B cell (primary cell): ENCODE measurements at regions of chr5 and their contacts with region 1.

Region 1: DNA sequence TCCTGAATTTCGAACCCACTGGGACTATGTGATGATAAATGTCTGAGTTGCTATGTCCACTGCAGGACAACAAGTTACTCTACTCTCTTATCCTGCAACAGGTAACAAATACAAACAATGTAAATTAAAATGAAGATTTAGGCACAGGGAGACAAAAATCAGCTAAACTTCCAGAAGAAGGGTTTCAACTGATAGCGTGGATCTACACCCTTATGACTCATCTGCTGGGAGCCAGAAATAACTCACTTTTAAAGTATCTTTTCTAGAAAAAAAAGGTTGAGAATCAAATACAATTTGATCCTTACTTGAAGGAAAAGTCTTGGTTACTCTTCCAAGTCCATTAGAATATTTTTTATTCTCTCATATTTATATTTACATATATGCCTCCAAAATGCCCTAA is 21.4 kb downstream of the PJA2 start:
- DNase-seq: no peak
- ATAC-seq: no peak
- H3K4me3 ChIP-seq: no peak overlapping the region
- H3K4me3 Mint-ChIP-seq: no peak overlapping the region
- H3K27ac ChIP-seq: no peak overlapping the region
- H3K27ac Mint-ChIP-seq: no peak overlapping the region
- H3K4me1 ChIP-seq: peaks cover 0 to 9% of the 10 kb centered on the region in 2 donors
- H3K4me1 Mint-ChIP-seq: peaks cover 68% of the 10 kb centered on the region
- H3K27me3 ChIP-seq: no peaks in the 10 kb centered on the region
- H3K27me3 Mint-ChIP-seq: no peaks in the 10 kb centered on the region
- CTCF ChIP-seq: no peak

Region 2: GRCh38 chr5:108715408-108715807 is 673.0 kb before region 1 on chr5:
- CTCF ChIA-PET with region 1: no interaction called
- POLR2A ChIA-PET with region 1: interaction called, 10 read pairs
- intact Hi-C with region 1: no loop called
- DNase-seq: no peak
- ATAC-seq: no peak
- H3K4me3 ChIP-seq: no peak overlapping the region
- H3K4me3 Mint-ChIP-seq: no peak overlapping the region
- H3K27ac ChIP-seq: no peak overlapping the region
- H3K27ac Mint-ChIP-seq: no peak overlapping the region
- H3K4me1 ChIP-seq: no peaks in the 10 kb centered on the region
- H3K4me1 Mint-ChIP-seq: no peaks in the 10 kb centered on the region
- H3K27me3 ChIP-seq: no peaks in the 10 kb centered on the region
- H3K27me3 Mint-ChIP-seq: no peaks in the 10 kb centered on the region
- CTCF ChIP-seq: no peak

Region 3: DNA sequence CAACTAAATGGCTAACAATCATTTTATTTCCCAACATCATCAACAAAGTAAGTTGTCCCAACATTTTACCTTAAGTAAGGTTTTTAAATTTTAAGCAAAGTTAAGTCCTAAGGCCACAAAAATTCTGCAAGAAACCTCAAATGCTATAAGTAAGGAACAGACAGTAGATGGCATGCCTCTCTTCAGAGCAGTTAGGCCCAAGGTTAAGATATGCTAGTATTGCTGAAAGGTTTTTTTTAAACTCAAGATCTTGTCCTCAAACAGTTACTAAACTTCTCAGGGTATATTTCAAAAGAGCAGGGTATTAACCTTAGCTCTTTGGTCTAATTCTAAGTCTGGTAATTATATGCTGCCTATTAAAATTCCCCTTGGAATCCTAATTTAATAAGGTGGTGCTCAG is 13.8 kb before region 1 on chr5:
- CTCF ChIA-PET with region 1: no interaction called
- POLR2A ChIA-PET with region 1: no interaction called
- intact Hi-C with region 1: loop called (anchors 2 kb)
- DNase-seq: no peak
- ATAC-seq: no peak
- H3K4me3 ChIP-seq: no peak overlapping the region
- H3K4me3 Mint-ChIP-seq: no peak overlapping the region
- H3K27ac ChIP-seq: no peak overlapping the region
- H3K27ac Mint-ChIP-seq: no peak overlapping the region
- H3K4me1 ChIP-seq: no peaks in the 10 kb centered on the region
- H3K4me1 Mint-ChIP-seq: peaks cover 18% of the 10 kb centered on the region
- H3K27me3 ChIP-seq: no peaks in the 10 kb centered on the region
- H3K27me3 Mint-ChIP-seq: no peaks in the 10 kb centered on the region
- CTCF ChIP-seq: peak; percentile 10

Region 4: DNA sequence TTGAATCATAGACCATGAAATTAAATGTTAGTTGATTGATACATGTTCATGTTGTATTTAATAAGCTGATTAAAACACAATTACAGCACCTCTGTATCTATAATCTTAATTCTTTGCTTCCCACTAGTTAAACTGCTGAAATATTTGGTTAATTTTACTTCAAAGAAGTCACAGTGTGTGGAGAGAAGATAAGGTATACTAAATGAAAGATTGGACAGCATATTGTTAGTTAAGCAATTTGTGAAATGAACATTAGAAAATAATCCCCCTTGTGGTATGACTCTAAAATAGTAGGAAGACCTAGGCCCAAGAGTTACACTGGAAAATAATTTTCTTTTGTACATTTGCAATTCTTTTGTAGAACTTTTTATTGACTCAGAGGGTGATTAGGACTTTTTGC is 331.6 kb after region 1 on chr5:
- CTCF ChIA-PET with region 1: no interaction called
- POLR2A ChIA-PET with region 1: no interaction called
- intact Hi-C with region 1: no loop called
- DNase-seq: no peak
- ATAC-seq: no peak
- H3K4me3 ChIP-seq: no peak overlapping the region
- H3K4me3 Mint-ChIP-seq: no peak overlapping the region
- H3K27ac ChIP-seq: no peak overlapping the region
- H3K27ac Mint-ChIP-seq: no peak overlapping the region
- H3K4me1 ChIP-seq: no peaks in the 10 kb centered on the region
- H3K4me1 Mint-ChIP-seq: peaks cover 10% of the 10 kb centered on the region
- H3K27me3 ChIP-seq: no peaks in the 10 kb centered on the region
- H3K27me3 Mint-ChIP-seq: no peaks in the 10 kb centered on the region
- CTCF ChIP-seq: no peak